ENCODE measurements at regions of chr15 and their contacts with region 1.

Region 1: GRCh38 chr15:40430271-40430805 is 10.4 kb upstream of the BAHD1 start:
- DNase-seq: no peak
- ATAC-seq: no peak
- H3K4me3 ChIP-seq: no peak overlapping the region
- H3K4me3 Mint-ChIP-seq: no peak overlapping the region
- H3K27ac ChIP-seq: no peak overlapping the region
- H3K27ac Mint-ChIP-seq: no peak overlapping the region
- H3K4me1 ChIP-seq: peaks cover 2% of the 10 kb centered on the region
- H3K4me1 Mint-ChIP-seq: peaks cover 3% of the 10 kb centered on the region
- H3K27me3 ChIP-seq: no peaks in the 10 kb centered on the region
- H3K27me3 Mint-ChIP-seq: no peaks in the 10 kb centered on the region
- CTCF ChIP-seq: no peak

Region 2: DNA sequence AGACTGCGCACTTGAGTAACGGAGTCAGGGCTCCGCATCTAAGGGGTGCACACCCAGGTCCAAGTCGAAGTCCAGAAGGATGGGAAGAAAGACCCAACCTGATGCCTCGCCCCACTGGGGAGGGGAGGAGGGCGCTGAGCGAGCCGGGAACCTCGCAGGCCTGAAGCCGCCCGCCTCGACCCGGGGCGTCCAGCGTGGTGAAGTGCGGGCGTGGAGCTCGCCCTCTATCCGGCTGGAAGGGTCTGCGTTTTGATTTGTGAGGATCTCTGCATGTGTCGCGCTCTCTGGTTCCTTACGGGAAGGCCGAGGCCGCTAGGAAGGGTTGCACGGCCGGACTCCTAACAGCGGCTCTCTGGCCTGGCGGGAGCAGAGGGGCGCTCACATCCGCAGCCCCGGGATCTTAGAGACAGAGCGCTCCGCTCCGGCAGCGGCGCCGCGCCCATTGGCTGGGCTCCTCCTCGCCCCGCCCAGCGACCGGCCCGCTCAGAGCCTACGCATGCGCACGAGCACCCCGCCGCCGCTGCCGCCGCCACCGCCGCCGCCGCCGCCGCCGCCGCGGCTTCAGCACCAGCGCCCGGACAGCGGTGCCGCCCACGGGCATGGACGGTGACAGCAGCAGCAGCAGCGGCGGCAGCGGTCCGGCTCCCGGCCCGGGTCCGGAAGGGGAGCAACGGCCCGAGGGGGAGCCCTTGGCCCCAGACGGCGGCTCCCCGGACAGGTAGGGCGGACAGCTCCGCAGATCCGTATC is 72.4 kb before region 1 on chr15 and contains the start of gene DISP2:
- CTCF ChIA-PET with region 1: no interaction called
- POLR2A ChIA-PET with region 1: no interaction called
- intact Hi-C with region 1: no loop called
- DNase-seq: peak; percentile 82 to 93 (median 88)
- ATAC-seq: peak; percentile 94
- H3K4me3 ChIP-seq: peak within 1 kb of the TSS; percentile 63 to 65
- H3K4me3 Mint-ChIP-seq: peak within 1 kb of the TSS; percentile 83
- H3K27ac ChIP-seq: no peak within 1 kb of the TSS
- H3K27ac Mint-ChIP-seq: no peak within 1 kb of the TSS
- H3K4me1 ChIP-seq: peaks cover 13% of the 10 kb centered on the region
- H3K4me1 Mint-ChIP-seq: peaks cover 9% of the 10 kb centered on the region
- H3K27me3 ChIP-seq: no peaks in the 10 kb centered on the region
- H3K27me3 Mint-ChIP-seq: peaks cover 2% of the 10 kb centered on the region
- CTCF ChIP-seq: no peak
- total RNA-seq, gene DISP2: 0.05 to 0.25 TPM

Region 3: GRCh38 chr15:40454904-40455391 is 24.6 kb after region 1 on chr15:
- CTCF ChIA-PET with region 1: no interaction called
- POLR2A ChIA-PET with region 1: no interaction called
- intact Hi-C with region 1: loop called in 1 of 2 experiments (anchors 2 kb)
- DNase-seq: peak in 4 of 9 experiments; percentile 24 to 55 (median 37)
- ATAC-seq: peak; percentile 38
- H3K4me3 ChIP-seq: no peak overlapping the region
- H3K4me3 Mint-ChIP-seq: peak overlapping the region; percentile 81
- H3K27ac ChIP-seq: peak overlapping the region; percentile 11 to 56
- H3K27ac Mint-ChIP-seq: peak overlapping the region; percentile 90
- H3K4me1 ChIP-seq: peaks cover 76% of the 10 kb centered on the region
- H3K4me1 Mint-ChIP-seq: peaks cover 71% of the 10 kb centered on the region
- H3K27me3 ChIP-seq: no peaks in the 10 kb centered on the region
- H3K27me3 Mint-ChIP-seq: no peaks in the 10 kb centered on the region
- CTCF ChIP-seq: no peak

Region 4: DNA sequence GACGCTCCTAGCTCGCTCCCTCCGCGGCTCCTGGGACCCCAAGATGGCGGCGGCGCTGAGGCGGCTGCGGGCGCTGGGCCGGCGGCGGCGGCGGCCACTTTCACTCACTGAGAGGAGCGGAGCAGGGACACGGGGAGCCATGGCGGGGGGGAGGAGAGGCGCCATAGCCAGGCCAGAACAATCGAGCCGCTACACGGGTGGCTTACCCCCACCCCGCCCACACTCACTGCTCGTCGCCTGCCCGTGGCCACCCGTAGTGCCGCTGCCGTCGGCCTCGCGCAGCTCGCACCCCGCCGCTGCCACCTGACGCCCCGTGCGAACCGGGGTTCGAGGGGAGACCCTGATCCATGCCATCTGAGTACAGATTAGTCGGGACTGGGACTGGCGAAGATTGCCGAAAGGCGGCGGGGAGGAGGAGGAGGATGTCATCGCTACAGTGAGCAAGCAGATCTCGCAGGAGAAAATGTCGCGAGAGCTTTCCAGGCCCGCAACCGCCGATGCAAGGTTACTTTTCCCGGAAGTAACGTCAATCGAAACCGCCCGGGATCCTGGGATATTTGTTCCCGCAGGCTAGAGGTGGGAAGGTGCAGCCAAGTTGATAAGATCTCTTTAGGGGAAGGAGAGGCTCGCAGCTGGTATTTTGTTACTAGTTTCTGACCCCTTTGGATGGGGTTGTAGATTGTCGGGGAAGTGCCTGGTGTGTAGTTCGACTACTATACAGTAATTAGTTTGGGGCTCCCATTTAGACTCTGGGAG is 686.0 kb after region 1 on chr15 and contains the start of gene INO80:
- CTCF ChIA-PET with region 1: no interaction called
- POLR2A ChIA-PET with region 1: no interaction called
- intact Hi-C with region 1: no loop called
- DNase-seq: peak; percentile 90 to 98 (median 96)
- ATAC-seq: peak; percentile 74
- H3K4me3 ChIP-seq: peak within 1 kb of the TSS; percentile 68 to 98
- H3K4me3 Mint-ChIP-seq: peak within 1 kb of the TSS; percentile 96
- H3K27ac ChIP-seq: peak within 1 kb of the TSS; percentile 83 to 96
- H3K27ac Mint-ChIP-seq: peak within 1 kb of the TSS; percentile 99
- H3K4me1 ChIP-seq: peaks cover 15% of the 10 kb centered on the region
- H3K4me1 Mint-ChIP-seq: peaks cover 28% of the 10 kb centered on the region
- H3K27me3 ChIP-seq: no peaks in the 10 kb centered on the region
- H3K27me3 Mint-ChIP-seq: no peaks in the 10 kb centered on the region
- CTCF ChIP-seq: no peak
- total RNA-seq, gene INO80: 19.7 to 24.2 TPM